CD4-positive, alpha-beta T cell (primary cell): ENCODE measurements at regions of chr9 and their contacts with region 1.

Region 1: DNA sequence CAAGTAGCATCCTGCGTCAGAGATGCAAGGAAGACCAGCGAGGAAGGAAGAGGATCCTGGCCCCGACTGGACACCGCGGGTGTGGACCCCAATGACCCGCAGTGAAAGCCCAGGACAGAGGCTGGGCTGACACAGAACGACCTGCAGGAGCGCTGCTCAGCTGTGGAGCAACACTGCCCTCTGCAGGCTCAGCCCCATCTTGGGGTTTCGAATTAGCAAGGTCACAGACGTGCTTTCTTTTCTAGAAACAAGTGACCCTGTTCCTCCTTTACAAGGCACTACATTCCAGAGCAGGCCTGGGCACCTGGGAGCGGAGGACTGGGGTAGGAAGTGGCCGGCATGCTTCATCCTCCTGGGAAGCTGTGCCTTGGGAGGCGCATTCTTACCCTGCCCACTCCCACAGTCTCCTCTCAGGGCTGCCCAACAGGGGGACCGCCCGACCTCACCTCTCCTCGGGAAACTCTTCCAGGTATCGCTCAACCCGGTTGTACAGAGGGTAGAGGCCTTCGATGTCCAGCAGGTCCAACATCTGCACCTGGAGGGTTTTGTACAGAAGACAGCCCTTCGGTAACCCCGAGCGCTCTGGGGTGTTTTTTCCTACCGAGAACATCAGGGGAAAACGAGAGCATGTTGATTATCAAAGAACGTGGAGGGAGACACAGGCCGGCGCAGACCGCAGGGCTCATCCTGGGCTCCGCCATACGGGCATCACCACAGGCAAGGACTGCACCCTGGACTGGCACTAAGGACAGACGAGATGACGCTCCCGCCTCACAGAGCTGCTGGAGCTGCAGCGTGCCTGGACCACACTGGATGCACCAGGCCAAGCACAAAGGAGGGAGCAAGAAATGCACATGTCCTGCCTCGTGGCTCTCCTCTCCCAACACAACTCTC is 35.0 kb downstream of the IPPK start:
- DNase-seq: peak; percentile 33 to 73 (median 55)
- ATAC-seq: peak; percentile 64
- H3K4me3 ChIP-seq: no peak overlapping the region
- H3K4me3 Mint-ChIP-seq: no peak overlapping the region
- H3K27ac ChIP-seq: no peak overlapping the region
- H3K27ac Mint-ChIP-seq: no peak overlapping the region
- H3K4me1 ChIP-seq: no peaks in the 10 kb centered on the region
- H3K4me1 Mint-ChIP-seq: no peaks in the 10 kb centered on the region
- H3K27me3 ChIP-seq: no peaks in the 10 kb centered on the region
- H3K27me3 Mint-ChIP-seq: no peaks in the 10 kb centered on the region
- CTCF ChIP-seq: peak; percentile 63

Region 2: GRCh38 chr9:91775011-91775707 is 859.8 kb before region 1 on chr9:
- CTCF ChIA-PET with region 1: no interaction called
- POLR2A ChIA-PET with region 1: no interaction called
- intact Hi-C with region 1: loop called in 1 of 2 experiments (anchors 10 kb)
- DNase-seq: peak; percentile 30 to 73 (median 43)
- ATAC-seq: peak; percentile 44
- H3K4me3 ChIP-seq: no peak overlapping the region
- H3K4me3 Mint-ChIP-seq: no peak overlapping the region
- H3K27ac ChIP-seq: no peak overlapping the region
- H3K27ac Mint-ChIP-seq: no peak overlapping the region
- H3K4me1 ChIP-seq: peaks cover 4% of the 10 kb centered on the region
- H3K4me1 Mint-ChIP-seq: no peaks in the 10 kb centered on the region
- H3K27me3 ChIP-seq: peaks cover 2 to 15% of the 10 kb centered on the region in 2 experiments
- H3K27me3 Mint-ChIP-seq: peaks cover 33% of the 10 kb centered on the region
- CTCF ChIP-seq: peak; percentile 69

Region 3: GRCh38 chr9:92133949-92134604 is 500.9 kb before region 1 on chr9:
- CTCF ChIA-PET with region 1: no interaction called
- POLR2A ChIA-PET with region 1: no interaction called
- intact Hi-C with region 1: loop called (anchors 1 kb)
- DNase-seq: peak; percentile 56 to 87 (median 64)
- ATAC-seq: peak; percentile 86
- H3K4me3 ChIP-seq: no peak overlapping the region
- H3K4me3 Mint-ChIP-seq: no peak overlapping the region
- H3K27ac ChIP-seq: no peak overlapping the region
- H3K27ac Mint-ChIP-seq: no peak overlapping the region
- H3K4me1 ChIP-seq: peaks cover 12% of the 10 kb centered on the region
- H3K4me1 Mint-ChIP-seq: peaks cover 7% of the 10 kb centered on the region
- H3K27me3 ChIP-seq: peaks cover 0 to 3% of the 10 kb centered on the region in 2 experiments
- H3K27me3 Mint-ChIP-seq: peaks cover 36% of the 10 kb centered on the region
- CTCF ChIP-seq: peak; percentile 89

Region 4: GRCh38 chr9:92140074-92140753 is 494.7 kb before region 1 on chr9:
- CTCF ChIA-PET with region 1: interaction called, 11 read pairs
- POLR2A ChIA-PET with region 1: no interaction called
- intact Hi-C with region 1: loop called (anchors 1 kb)
- DNase-seq: peak; percentile 49 to 80 (median 58)
- ATAC-seq: peak; percentile 73
- H3K4me3 ChIP-seq: peak overlapping the region; percentile 14
- H3K4me3 Mint-ChIP-seq: peak overlapping the region; percentile 80
- H3K27ac ChIP-seq: no peak overlapping the region
- H3K27ac Mint-ChIP-seq: no peak overlapping the region
- H3K4me1 ChIP-seq: peaks cover 14% of the 10 kb centered on the region
- H3K4me1 Mint-ChIP-seq: peaks cover 10% of the 10 kb centered on the region
- H3K27me3 ChIP-seq: peaks cover 21 to 22% of the 10 kb centered on the region in 2 experiments
- H3K27me3 Mint-ChIP-seq: peaks cover 57% of the 10 kb centered on the region
- CTCF ChIP-seq: peak; percentile 90

Region 5: GRCh38 chr9:92342825-92343488 is 292.0 kb before region 1 on chr9:
- CTCF ChIA-PET with region 1: no interaction called
- POLR2A ChIA-PET with region 1: no interaction called
- intact Hi-C with region 1: loop called in 1 of 2 experiments (anchors 10 kb)
- DNase-seq: no peak
- ATAC-seq: no peak
- H3K4me3 ChIP-seq: no peak overlapping the region
- H3K4me3 Mint-ChIP-seq: no peak overlapping the region
- H3K27ac ChIP-seq: no peak overlapping the region
- H3K27ac Mint-ChIP-seq: no peak overlapping the region
- H3K4me1 ChIP-seq: no peaks in the 10 kb centered on the region
- H3K4me1 Mint-ChIP-seq: no peaks in the 10 kb centered on the region
- H3K27me3 ChIP-seq: no peaks in the 10 kb centered on the region
- H3K27me3 Mint-ChIP-seq: no peaks in the 10 kb centered on the region
- CTCF ChIP-seq: no peak

Region 6: GRCh38 chr9:94101162-94101853 is 1466.3 kb after region 1 on chr9:
- CTCF ChIA-PET with region 1: no interaction called
- POLR2A ChIA-PET with region 1: no interaction called
- intact Hi-C with region 1: no loop called
- DNase-seq: no peak
- ATAC-seq: no peak
- H3K4me3 ChIP-seq: no peak overlapping the region
- H3K4me3 Mint-ChIP-seq: no peak overlapping the region
- H3K27ac ChIP-seq: no peak overlapping the region
- H3K27ac Mint-ChIP-seq: no peak overlapping the region
- H3K4me1 ChIP-seq: no peaks in the 10 kb centered on the region
- H3K4me1 Mint-ChIP-seq: peaks cover 5% of the 10 kb centered on the region
- H3K27me3 ChIP-seq: no peaks in the 10 kb centered on the region
- H3K27me3 Mint-ChIP-seq: no peaks in the 10 kb centered on the region
- CTCF ChIP-seq: no peak